Caco-2 (cell line): ENCODE measurements at regions of chr13 and their contacts with region 1.

Region 1: GRCh38 chr13:29850224-29850898 is at the start of gene UBL3:
- DNase-seq: peak; percentile 95 to 98
- H3K4me3 ChIP-seq: peak within 1 kb of the TSS; percentile 58
- H3K4me3 Mint-ChIP-seq: peak within 1 kb of the TSS; percentile 92
- H3K27ac Mint-ChIP-seq: peak within 1 kb of the TSS; percentile 99
- H3K4me1 ChIP-seq: peaks cover 23% of the 10 kb centered on the region
- H3K4me1 Mint-ChIP-seq: peaks cover 24% of the 10 kb centered on the region
- H3K27me3 ChIP-seq: no peaks in the 10 kb centered on the region
- H3K27me3 Mint-ChIP-seq: no peaks in the 10 kb centered on the region
- CTCF ChIP-seq: no peak
- total RNA-seq, gene UBL3: 37.4 and 37.5 TPM in 2 replicates

Region 2: DNA sequence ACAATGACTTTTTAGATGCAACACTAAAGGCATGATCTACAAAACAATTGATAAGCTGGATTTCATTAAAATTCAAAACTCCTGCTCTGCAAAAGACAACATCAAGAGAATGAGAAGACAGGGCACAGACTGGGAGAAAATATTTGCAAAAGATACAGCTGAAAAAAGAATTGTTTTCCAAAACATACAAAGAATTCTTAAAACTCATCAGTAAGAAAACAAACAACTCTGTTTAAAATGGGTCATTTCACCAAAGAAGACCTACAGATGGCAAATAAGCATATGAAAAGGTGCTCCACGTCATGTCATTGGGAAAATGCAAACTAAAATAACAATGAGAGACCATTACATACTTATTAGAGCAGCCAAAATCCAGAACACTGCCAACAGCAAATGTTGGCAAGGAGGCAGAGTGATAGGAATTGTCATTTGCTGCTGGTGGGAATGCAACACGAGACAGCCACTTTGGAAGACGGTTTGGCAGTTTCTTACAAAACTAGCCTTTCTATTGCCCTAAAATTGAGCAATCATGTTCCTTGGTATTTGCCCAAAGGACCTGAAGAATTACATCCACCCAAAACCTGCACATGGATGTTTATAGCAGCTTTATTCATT is 1394.7 kb before region 1 on chr13:
- CTCF ChIA-PET with region 1: no interaction called
- POLR2A ChIA-PET with region 1: interaction called, 12 read pairs
- intact Hi-C with region 1: no loop called
- DNase-seq: no peak
- H3K4me3 ChIP-seq: no peak overlapping the region
- H3K4me3 Mint-ChIP-seq: no peak overlapping the region
- H3K27ac Mint-ChIP-seq: no peak overlapping the region
- H3K4me1 ChIP-seq: no peaks in the 10 kb centered on the region
- H3K4me1 Mint-ChIP-seq: no peaks in the 10 kb centered on the region
- H3K27me3 ChIP-seq: no peaks in the 10 kb centered on the region
- H3K27me3 Mint-ChIP-seq: peaks cover 9% of the 10 kb centered on the region
- CTCF ChIP-seq: no peak

Region 3: DNA sequence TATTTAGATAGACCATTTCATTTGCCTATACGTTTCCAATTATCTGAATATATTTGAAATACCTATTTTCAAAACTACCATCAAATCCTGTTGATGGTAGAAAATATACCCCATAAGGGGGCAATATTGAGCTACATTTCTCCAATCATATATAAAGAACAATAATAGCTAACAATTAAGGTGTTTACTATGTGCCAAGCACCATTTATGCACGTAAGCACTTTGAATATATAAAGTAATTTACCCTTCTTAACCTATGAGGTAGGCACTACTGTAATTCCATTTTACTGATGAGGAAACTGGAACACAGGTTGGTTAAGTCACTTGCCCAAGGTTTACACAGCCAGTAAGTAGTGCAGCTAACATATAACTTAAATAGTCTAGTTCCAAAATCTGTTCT is 79.1 kb before region 1 on chr13:
- CTCF ChIA-PET with region 1: interaction called, 17 read pairs
- POLR2A ChIA-PET with region 1: no interaction called
- intact Hi-C with region 1: loop called (anchors 2 kb)
- DNase-seq: peak in 1 of 2 experiments; percentile 40
- H3K4me3 ChIP-seq: no peak overlapping the region
- H3K4me3 Mint-ChIP-seq: no peak overlapping the region
- H3K27ac Mint-ChIP-seq: no peak overlapping the region
- H3K4me1 ChIP-seq: no peaks in the 10 kb centered on the region
- H3K4me1 Mint-ChIP-seq: peaks cover 7% of the 10 kb centered on the region
- H3K27me3 ChIP-seq: no peaks in the 10 kb centered on the region
- H3K27me3 Mint-ChIP-seq: no peaks in the 10 kb centered on the region
- CTCF ChIP-seq: peak; percentile 39 to 59

Region 4: GRCh38 chr13:30071969-30072817 is 221.8 kb after region 1 on chr13:
- CTCF ChIA-PET with region 1: no interaction called
- POLR2A ChIA-PET with region 1: interaction called, 4 read pairs
- intact Hi-C with region 1: loop called (anchors 1 kb)
- DNase-seq: peak; percentile 86 to 93
- H3K4me3 ChIP-seq: no peak overlapping the region
- H3K4me3 Mint-ChIP-seq: peak overlapping the region; percentile 61
- H3K27ac Mint-ChIP-seq: peak overlapping the region; percentile 91
- H3K4me1 ChIP-seq: peaks cover 23% of the 10 kb centered on the region
- H3K4me1 Mint-ChIP-seq: peaks cover 23% of the 10 kb centered on the region
- H3K27me3 ChIP-seq: no peaks in the 10 kb centered on the region
- H3K27me3 Mint-ChIP-seq: no peaks in the 10 kb centered on the region
- CTCF ChIP-seq: no peak

Region 5: GRCh38 chr13:31012655-31013024 is 1162.3 kb after region 1 on chr13:
- CTCF ChIA-PET with region 1: no interaction called
- POLR2A ChIA-PET with region 1: no interaction called
- intact Hi-C with region 1: no loop called
- DNase-seq: peak in 1 of 2 experiments; percentile 39
- H3K4me3 ChIP-seq: no peak overlapping the region
- H3K4me3 Mint-ChIP-seq: no peak overlapping the region
- H3K27ac Mint-ChIP-seq: no peak overlapping the region
- H3K4me1 ChIP-seq: no peaks in the 10 kb centered on the region
- H3K4me1 Mint-ChIP-seq: no peaks in the 10 kb centered on the region
- H3K27me3 ChIP-seq: no peaks in the 10 kb centered on the region
- H3K27me3 Mint-ChIP-seq: peaks cover 9% of the 10 kb centered on the region
- CTCF ChIP-seq: peak; percentile 24 to 51

Region 6: DNA sequence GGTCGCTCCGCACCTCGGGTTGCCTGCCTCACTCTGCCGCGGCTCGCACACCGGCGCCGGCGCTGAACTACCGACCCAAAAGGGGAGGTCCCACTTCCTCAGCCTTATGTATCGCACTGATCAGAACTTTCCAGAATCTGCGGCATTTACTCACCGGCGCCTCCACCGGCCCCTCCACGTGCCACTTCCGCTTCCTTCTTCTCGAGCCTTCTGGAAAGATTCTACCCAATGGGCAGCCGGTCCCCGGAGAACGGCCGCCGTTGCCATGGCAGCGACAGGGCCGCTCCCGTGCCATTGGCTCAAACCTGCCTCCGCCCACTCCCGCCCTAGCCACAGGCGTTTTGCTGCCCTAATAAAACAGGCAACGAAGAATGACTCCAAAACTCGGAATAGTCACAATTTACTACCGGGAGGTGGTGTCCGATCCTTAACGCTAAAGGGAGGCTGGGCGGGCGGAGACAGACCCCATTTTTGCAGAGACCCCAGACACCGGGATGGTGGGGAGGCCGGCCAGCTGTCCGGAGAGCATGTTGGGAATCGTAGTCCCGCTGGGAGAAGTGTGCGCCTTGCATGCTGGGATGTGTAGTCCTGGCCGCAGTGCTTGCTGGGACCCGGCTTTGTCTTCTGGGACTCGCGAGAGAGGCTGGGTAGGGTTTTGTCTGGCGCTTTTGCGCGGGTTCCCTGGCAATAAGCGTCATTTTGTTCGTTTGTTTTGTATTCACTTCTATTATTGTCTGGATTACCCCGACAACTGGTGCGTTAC is 1311.6 kb after region 1 on chr13 and contains the start of gene HSPH1:
- CTCF ChIA-PET with region 1: no interaction called
- POLR2A ChIA-PET with region 1: no interaction called
- intact Hi-C with region 1: loop called (anchors 5 kb)
- DNase-seq: peak; percentile 99
- H3K4me3 ChIP-seq: peak within 1 kb of the TSS; percentile 91
- H3K4me3 Mint-ChIP-seq: peak within 1 kb of the TSS; percentile 98
- H3K27ac Mint-ChIP-seq: peak within 1 kb of the TSS; percentile 97
- H3K4me1 ChIP-seq: peaks cover 18% of the 10 kb centered on the region; the same call in 1 of the 2 replicates
- H3K4me1 Mint-ChIP-seq: peaks cover 20% of the 10 kb centered on the region
- H3K27me3 ChIP-seq: no peaks in the 10 kb centered on the region
- H3K27me3 Mint-ChIP-seq: no peaks in the 10 kb centered on the region
- CTCF ChIP-seq: peak; percentile 43 to 45
- total RNA-seq, gene HSPH1: 141 and 151 TPM in 2 replicates